ENCODE measurements at regions of chr6 and their contacts with region 1.

Region 1: DNA sequence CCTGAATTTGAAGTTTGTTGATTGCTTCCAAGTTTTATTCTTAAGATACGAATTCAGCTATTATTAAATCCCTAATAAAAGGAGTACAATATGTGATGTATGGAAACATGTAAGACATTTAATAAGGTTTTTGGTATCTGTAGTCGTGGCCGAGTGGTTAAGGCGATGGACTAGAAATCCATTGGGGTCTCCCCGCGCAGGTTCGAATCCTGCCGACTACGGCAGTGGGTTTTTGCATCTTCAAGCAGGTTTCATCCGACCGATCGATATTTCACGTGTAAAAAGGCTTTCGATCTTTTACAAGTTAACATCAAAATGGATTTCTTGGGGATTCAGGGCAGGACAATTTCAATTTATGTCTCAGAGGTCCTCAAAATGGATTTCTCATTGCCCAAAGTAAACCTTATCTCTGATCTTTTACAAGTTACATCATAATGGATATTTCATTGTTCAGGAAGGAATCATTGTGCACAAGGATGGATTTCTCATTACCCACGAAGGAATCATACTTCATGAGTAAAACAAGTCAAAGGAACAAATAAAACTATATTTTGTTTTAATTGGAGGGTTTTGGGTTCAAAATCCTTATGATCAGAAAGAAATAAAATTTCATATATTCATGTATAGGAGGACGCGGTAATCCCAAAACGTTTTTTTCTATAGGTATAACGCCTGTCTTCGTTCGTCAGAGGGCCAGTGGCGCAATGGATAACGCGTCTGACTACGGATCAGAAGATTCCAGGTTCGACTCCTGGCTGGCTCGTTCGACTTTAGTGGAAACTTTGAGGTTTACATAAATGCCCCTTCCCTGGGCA is 37.3 kb upstream of the BTN3A2 start:
- DNase-seq: peak; percentile 68
- H3K4me3 ChIP-seq: peak overlapping the region; percentile 59
- H3K27ac ChIP-seq: peak overlapping the region; percentile 37
- H3K4me1 ChIP-seq: peaks cover 17% of the 10 kb centered on the region
- H3K27me3 ChIP-seq: no peaks in the 10 kb centered on the region

Region 2: GRCh38 chr6:26216356-26216885 is 111.2 kb before region 1 on chr6:
- in situ Hi-C with region 1: no loop called
- DNase-seq: peak; percentile 94
- H3K4me3 ChIP-seq: peak overlapping the region; percentile 70
- H3K27ac ChIP-seq: peak overlapping the region; percentile 77
- H3K4me1 ChIP-seq: peaks cover 14% of the 10 kb centered on the region; the same call in 1 of the 2 replicates
- H3K27me3 ChIP-seq: no peaks in the 10 kb centered on the region

Region 3: DNA sequence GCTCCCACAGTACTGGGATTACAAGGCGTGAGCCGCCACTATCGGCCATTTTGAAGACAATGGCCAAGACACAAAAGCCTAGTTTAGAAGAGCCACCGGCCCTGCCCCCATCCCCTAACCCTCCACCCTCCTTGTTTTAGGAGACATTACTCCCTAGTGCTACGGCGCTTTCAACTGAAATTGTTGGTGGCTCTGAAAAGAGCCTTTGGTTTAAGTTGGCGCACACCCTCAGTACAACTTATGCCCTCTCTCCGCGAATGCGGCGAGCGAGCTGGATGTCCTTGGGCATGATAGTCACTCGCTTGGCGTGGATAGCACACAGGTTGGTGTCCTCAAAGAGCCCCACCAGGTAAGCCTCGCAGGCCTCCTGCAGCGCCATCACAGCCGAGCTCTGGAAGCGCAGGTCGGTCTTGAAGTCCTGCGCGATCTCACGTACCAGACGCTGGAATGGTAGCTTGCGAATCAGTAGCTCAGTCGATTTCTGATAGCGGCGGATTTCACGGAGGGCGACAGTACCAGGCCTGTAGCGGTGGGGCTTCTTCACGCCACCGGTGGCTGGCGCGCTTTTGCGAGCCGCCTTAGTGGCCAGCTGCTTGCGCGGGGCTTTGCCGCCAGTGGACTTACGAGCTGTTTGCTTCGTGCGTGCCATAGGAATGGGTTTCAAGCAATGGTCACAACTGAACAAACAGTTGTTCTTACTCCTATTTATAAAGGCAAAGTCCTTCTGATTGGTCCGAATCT is 77.5 kb before region 1 on chr6:
- in situ Hi-C with region 1: no loop called
- DNase-seq: peak; percentile 52
- H3K4me3 ChIP-seq: peak overlapping the region; percentile 74
- H3K27ac ChIP-seq: peak overlapping the region; percentile 2; the same call in 1 of the 2 replicates
- H3K4me1 ChIP-seq: no peaks in the 10 kb centered on the region
- H3K27me3 ChIP-seq: no peaks in the 10 kb centered on the region

Region 4: GRCh38 chr6:26537846-26538571 is 210.4 kb after region 1 on chr6 and contains the start of gene HMGN4:
- in situ Hi-C with region 1: loop called (anchors 25 kb)
- DNase-seq: peak; percentile 95
- H3K4me3 ChIP-seq: peak within 1 kb of the TSS; percentile 89
- H3K27ac ChIP-seq: peak within 1 kb of the TSS; percentile 97
- H3K4me1 ChIP-seq: peaks cover 26% of the 10 kb centered on the region
- H3K27me3 ChIP-seq: no peaks in the 10 kb centered on the region
- total RNA-seq, gene HMGN4: 81.6 and 87.2 TPM in 2 replicates